ENCODE measurements at regions of chr6 and their contacts with region 1.

Region 1: GRCh38 chr6:157428427-157429202 is 47.6 kb downstream of the ZDHHC14 start:
- DNase-seq: peak; percentile 94
- H3K4me3 Mint-ChIP-seq: peak overlapping the region; percentile 43
- H3K27ac Mint-ChIP-seq: peak overlapping the region; percentile 90
- H3K4me1 Mint-ChIP-seq: peaks cover 43% of the 10 kb centered on the region
- H3K27me3 Mint-ChIP-seq: no peaks in the 10 kb centered on the region

Region 2: GRCh38 chr6:156857573-156857972 is 571.0 kb before region 1 on chr6:
- CTCF ChIA-PET with region 1: no interaction called
- intact Hi-C with region 1: loop called (anchors 5 kb)
- DNase-seq: peak; percentile 57
- H3K4me3 Mint-ChIP-seq: no peak overlapping the region
- H3K27ac Mint-ChIP-seq: peak overlapping the region; percentile 89
- H3K4me1 Mint-ChIP-seq: peaks cover 77% of the 10 kb centered on the region
- H3K27me3 Mint-ChIP-seq: no peaks in the 10 kb centered on the region

Region 3: DNA sequence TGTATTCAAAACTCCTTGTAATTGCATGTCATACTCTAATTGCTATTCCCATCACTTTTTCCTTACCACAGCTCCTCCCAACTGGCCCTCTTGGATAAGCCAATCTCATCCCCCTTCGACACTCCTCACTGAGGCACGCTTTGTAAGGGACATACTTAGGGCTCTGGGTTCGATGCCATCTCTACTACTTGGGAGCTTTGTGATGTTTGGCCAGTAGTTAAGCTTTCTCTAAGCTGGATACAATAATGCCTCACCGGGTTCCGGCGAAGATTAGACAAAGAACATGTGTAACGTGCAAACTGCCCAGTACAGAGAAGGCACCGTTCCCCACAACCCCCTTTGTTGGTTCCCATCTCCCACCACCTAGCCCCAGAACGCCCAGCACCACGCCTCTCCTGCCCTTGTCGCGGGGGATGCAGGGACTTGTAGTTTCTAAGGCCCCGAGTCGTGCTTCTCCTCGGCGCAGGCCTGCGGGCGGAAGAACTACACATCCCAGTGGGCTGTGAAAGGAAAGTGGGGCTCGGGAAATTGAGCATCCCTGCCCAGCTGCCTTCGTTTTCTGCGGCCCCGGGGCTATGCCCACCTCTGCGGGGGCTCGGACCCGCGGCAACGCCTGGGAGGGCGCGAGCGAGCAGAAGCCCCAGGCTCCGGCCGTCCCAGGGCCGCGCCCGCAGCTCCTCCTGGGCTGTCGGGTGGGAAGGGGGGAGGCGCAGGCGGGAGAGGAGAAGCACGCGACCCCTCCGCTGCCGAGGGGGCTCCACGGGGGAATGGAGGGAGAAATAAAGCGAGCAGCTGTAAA is 48.8 kb before region 1 on chr6:
- CTCF ChIA-PET with region 1: no interaction called
- intact Hi-C with region 1: loop called (anchors 1 kb)
- DNase-seq: peak; percentile 92
- H3K4me3 Mint-ChIP-seq: peak overlapping the region; percentile 81
- H3K27ac Mint-ChIP-seq: peak overlapping the region; percentile 59
- H3K4me1 Mint-ChIP-seq: peaks cover 36% of the 10 kb centered on the region
- H3K27me3 Mint-ChIP-seq: peaks cover 12% of the 10 kb centered on the region

Region 4: GRCh38 chr6:157385482-157385881 is 43.1 kb before region 1 on chr6:
- CTCF ChIA-PET with region 1: no interaction called
- intact Hi-C with region 1: loop called (anchors 1 kb)
- DNase-seq: peak; percentile 47
- H3K4me3 Mint-ChIP-seq: no peak overlapping the region
- H3K27ac Mint-ChIP-seq: no peak overlapping the region
- H3K4me1 Mint-ChIP-seq: peaks cover 24% of the 10 kb centered on the region
- H3K27me3 Mint-ChIP-seq: peaks cover 12% of the 10 kb centered on the region

Region 5: DNA sequence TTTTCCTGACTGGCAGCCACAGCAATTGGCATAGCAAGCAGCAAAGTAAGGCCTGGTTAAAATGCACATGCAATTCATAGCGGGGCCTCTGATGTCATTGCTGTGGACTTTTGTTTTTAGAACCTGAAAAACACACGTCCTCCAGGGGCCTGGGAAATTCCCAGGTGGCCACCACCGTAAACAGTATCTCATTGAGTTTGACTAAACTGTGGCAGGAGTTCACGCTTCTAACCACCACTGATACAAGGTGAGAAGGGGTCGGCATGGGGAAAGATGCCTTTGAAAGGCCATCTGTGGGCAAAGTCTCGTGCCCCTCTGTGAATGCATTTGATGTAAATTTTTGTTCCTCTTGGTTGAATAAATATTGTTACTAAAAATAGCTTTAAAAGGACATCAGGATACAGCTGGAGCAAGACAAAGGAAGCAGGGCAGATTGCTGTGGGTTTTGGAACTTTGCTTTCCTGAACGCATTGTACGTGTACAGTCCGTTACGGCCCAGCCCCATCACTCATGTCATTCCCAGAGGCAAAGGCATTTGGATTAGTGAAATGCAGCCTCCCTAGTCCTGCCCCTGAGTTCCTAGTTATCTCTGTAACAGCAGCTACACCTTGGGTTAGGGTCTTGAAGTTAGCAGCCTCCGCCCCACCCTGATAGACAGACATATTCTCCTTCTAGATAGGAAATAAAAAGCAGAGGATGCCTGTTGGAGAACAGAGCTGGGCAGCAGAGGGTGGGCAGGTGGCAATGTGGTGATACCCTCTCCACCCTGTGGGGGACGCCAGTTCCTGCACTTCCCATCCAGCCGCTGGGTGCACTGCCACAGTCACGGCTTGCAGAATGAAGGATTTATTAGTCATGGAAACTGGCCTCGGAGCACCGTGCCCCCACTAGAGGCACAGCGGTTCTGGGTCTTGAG is 32.6 kb after region 1 on chr6:
- CTCF ChIA-PET with region 1: interaction called, 3 read pairs
- intact Hi-C with region 1: loop called (anchors 1 kb)
- DNase-seq: peak; percentile 91
- H3K4me3 Mint-ChIP-seq: no peak overlapping the region
- H3K27ac Mint-ChIP-seq: peak overlapping the region; percentile 65
- H3K4me1 Mint-ChIP-seq: peaks cover 36% of the 10 kb centered on the region
- H3K27me3 Mint-ChIP-seq: no peaks in the 10 kb centered on the region